Activated CD4-positive, alpha-beta memory T cell treated with anti-CD3 and anti-CD28 coated beads for 36 hours (primary cell): ENCODE measurements at regions of chr7 and their contacts with region 1.

Region 1: DNA sequence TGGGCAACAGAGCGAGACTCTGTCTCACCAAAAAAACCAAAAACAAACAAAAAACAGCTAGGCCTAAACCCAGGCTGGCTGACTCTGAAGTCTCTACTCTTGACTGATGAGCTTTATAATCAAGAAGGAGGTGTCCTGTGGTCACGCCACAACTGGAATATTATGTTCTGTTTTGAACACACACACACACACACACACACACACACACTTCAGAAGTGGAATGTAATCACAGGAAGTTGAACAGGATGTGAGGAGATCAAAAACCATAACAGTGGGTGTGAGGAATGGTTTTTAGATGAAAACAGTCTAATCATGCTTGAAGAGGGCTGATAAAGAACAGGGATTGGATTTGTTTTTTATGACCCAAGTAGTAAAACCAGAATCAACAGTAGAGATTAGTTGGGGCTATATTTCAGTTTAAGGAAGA is 51.1 kb upstream of the IL6 start:
- DNase-seq: peak; percentile 61
- H3K4me3 Mint-ChIP-seq: no peak overlapping the region
- H3K27ac Mint-ChIP-seq: peak overlapping the region; percentile 47
- H3K4me1 Mint-ChIP-seq: peaks cover 75% of the 10 kb centered on the region
- H3K27me3 Mint-ChIP-seq: no peaks in the 10 kb centered on the region

Region 2: DNA sequence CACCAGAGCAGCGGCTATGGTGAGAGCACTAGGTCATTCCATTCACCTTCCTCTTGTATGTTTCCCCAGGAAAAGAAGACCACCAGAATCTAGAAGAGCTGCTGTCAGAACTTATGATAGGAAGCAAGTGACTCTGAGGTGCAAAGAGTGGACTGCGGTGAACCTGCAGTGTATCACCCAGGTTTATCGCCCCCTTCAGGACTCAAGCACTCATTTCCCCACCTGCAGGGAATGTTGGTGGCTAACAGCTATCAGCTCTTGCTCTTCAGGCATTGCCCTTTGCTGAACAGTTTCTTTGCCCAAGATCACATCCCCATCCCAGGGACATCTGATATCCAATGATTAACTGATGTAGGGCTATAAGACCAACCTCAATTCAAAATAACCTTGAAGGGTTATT is 15.2 kb before region 1 on chr7:
- CTCF ChIA-PET with region 1: interaction called, 9 read pairs
- POLR2A ChIA-PET with region 1: interaction called, 11 read pairs
- intact Hi-C with region 1: loop called (anchors 1 kb)
- DNase-seq: no peak
- H3K4me3 Mint-ChIP-seq: no peak overlapping the region
- H3K27ac Mint-ChIP-seq: no peak overlapping the region
- H3K4me1 Mint-ChIP-seq: peaks cover 26% of the 10 kb centered on the region
- H3K27me3 Mint-ChIP-seq: peaks cover 15% of the 10 kb centered on the region

Region 3: GRCh38 chr7:22697876-22698606 is 22.1 kb after region 1 on chr7:
- CTCF ChIA-PET with region 1: interaction called, 5 read pairs
- POLR2A ChIA-PET with region 1: interaction called, 6 read pairs
- intact Hi-C with region 1: loop called (anchors 1 kb)
- DNase-seq: peak; percentile 36
- H3K4me3 Mint-ChIP-seq: peak overlapping the region; percentile 13
- H3K27ac Mint-ChIP-seq: peak overlapping the region; percentile 85
- H3K4me1 Mint-ChIP-seq: peaks cover 66% of the 10 kb centered on the region
- H3K27me3 Mint-ChIP-seq: peaks cover 2% of the 10 kb centered on the region